ENCODE measurements at regions of chr1 and their contacts with region 1.

Region 1: GRCh38 chr1:94805912-94806311 is 14.2 kb upstream of the SLC44A3 start:
- H3K4me3 ChIP-seq: no peak overlapping the region
- H3K27ac ChIP-seq: no peak overlapping the region
- H3K4me1 ChIP-seq: peaks cover 9% of the 10 kb centered on the region
- CTCF ChIP-seq: peak; percentile 75

Region 2: GRCh38 chr1:94072840-94073522 is 732.9 kb before region 1 on chr1:
- CTCF ChIA-PET with region 1: no interaction called
- POLR2A ChIA-PET with region 1: no interaction called
- H3K4me3 ChIP-seq: no peak overlapping the region
- H3K27ac ChIP-seq: no peak overlapping the region
- H3K4me1 ChIP-seq: peaks cover 17% of the 10 kb centered on the region
- CTCF ChIP-seq: no peak

Region 3: GRCh38 chr1:94471271-94471670 is 334.6 kb before region 1 on chr1:
- CTCF ChIA-PET with region 1: interaction called, 23 read pairs
- POLR2A ChIA-PET with region 1: no interaction called
- H3K4me3 ChIP-seq: no peak overlapping the region
- H3K27ac ChIP-seq: no peak overlapping the region
- H3K4me1 ChIP-seq: no peaks in the 10 kb centered on the region
- CTCF ChIP-seq: no peak

Region 4: DNA sequence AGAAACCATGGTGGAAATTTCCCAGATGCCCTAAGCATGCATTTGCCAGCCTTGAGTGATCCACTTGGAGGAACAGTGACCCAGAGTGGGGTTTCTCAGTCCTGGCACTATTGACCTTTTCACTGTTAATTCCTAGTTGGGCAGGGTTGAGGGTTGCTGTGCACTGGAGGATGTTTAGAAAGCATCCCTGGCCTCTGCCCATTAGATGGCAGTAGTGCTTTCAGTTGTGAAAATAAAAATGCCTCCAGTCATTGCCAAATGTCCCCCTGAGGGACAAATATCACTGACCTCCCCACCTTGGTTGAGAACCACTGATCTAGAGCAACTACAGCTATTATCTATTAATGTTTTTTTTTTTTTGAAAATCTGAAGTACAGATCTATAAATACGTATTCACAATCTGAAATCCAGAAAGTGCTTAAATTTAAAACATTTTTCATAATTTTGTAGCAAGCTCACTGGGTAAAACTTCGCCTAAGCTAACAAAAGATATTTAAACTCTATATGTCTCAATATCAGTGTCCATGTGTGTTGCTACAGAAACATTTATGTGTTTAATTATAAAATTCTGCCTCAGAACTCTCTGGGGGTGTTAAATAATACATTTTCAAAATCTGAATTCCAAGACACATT is 291.7 kb before region 1 on chr1:
- CTCF ChIA-PET with region 1: interaction called, 27 read pairs
- POLR2A ChIA-PET with region 1: no interaction called
- H3K4me3 ChIP-seq: no peak overlapping the region
- H3K27ac ChIP-seq: no peak overlapping the region
- H3K4me1 ChIP-seq: no peaks in the 10 kb centered on the region
- CTCF ChIP-seq: no peak

Region 5: DNA sequence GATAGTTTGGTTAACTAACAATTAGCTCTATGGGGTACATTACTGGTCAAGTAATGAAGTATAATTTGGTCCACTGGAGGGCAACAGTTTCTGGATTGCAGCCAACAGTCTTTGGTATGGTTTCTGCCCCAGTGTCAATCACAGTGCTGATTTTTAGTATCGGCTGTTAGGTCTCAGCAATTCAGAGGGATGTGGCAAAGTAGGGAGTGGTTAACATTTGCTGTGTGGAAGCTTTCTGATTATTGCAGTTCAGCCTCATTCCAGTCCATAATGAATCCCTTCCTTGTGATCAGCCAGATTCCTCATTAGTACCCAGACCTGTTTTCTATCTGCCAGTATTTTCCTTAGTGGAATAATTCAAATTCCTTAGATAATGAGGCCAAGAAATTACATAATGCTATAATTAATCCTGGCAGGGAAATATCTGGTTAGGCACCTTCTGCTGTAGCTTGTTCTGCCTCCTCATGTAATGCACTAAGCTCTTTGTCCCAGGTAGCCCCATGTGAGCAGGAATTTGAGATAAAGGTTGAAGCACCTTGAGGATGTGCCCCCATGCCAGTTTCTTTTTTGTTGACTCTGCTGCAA is 278.4 kb before region 1 on chr1:
- CTCF ChIA-PET with region 1: interaction called, 79 read pairs
- POLR2A ChIA-PET with region 1: no interaction called
- H3K4me3 ChIP-seq: no peak overlapping the region
- H3K27ac ChIP-seq: no peak overlapping the region
- H3K4me1 ChIP-seq: no peaks in the 10 kb centered on the region
- CTCF ChIP-seq: no peak

Region 6: GRCh38 chr1:94854458-94855306 is 48.8 kb after region 1 on chr1:
- CTCF ChIA-PET with region 1: interaction called, 13 read pairs
- POLR2A ChIA-PET with region 1: no interaction called
- H3K4me3 ChIP-seq: peak overlapping the region; percentile 46
- H3K27ac ChIP-seq: no peak overlapping the region
- H3K4me1 ChIP-seq: peaks cover 5% of the 10 kb centered on the region; the same call in 1 of the 2 replicates
- CTCF ChIP-seq: peak; percentile 90

Measured in HEK293 (cell line).